ENCODE measurements at regions of chr15 and their contacts with region 1.

Region 1: GRCh38 chr15:92714477-92715401 is 59.2 kb upstream of the FAM174B start:
- DNase-seq: peak; percentile 82
- ATAC-seq: peak; percentile 94

Region 2: DNA sequence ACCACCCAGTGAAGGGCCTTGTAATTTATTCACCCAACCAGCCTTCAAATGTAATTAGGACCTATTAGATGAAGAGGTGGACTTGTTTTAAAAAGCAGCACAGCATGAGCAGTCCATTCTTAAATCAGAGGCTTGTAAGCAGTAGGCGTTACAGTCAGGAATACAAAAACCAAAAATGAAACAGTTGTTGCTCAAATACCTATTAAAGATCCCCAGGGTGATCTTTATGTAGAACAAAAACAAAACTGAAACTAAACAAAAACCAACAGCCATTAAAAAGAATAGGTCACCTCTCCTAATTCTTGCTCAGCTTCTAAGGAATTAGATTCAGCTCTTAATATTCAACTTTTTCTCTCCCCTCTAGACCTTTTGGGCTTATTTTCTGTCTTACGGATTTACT is 426.0 kb before region 1 on chr15:
- intact Hi-C with region 1: loop called (anchors 10 kb)
- DNase-seq: no peak
- ATAC-seq: no peak

Region 3: GRCh38 chr15:92391640-92392039 is 323.1 kb before region 1 on chr15:
- intact Hi-C with region 1: loop called (anchors 5 kb)
- DNase-seq: no peak
- ATAC-seq: peak; percentile 49

Region 4: GRCh38 chr15:92421976-92422375 is 292.8 kb before region 1 on chr15:
- intact Hi-C with region 1: no loop called
- DNase-seq: no peak
- ATAC-seq: no peak

Region 5: GRCh38 chr15:92521624-92522008 is 193.1 kb before region 1 on chr15:
- intact Hi-C with region 1: loop called (anchors 1 kb)
- DNase-seq: peak; percentile 66
- ATAC-seq: peak; percentile 96

Region 6: DNA sequence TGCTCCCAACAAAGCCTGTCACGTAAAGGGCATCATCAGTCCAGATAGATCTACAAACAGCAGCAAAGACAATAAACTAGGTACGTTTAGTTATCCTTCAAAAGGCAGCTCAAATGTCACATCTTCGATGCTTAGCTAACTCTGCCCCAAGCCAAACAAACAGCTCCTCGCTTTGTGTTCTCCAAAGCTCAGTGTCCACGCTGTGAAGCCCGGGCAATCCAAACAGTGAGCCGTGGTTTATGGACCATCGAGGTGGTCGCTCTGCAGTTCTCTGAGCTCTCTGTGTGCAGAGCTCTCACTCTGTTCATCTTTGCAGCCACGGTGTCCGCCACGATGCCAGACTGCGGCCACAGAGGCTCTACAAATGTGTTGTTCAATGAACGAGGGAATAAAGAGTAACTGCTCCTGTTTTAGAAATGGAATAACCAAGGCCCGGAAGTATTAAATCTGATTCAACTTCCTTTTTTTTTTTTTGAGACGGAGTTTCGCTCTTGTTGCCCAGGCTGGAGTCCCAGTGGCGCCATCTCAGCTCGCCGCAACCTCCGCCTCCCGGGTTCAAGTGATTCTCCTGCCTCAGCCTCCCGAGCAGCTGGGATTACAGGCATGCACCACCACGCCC is 58.0 kb after region 1 on chr15:
- intact Hi-C with region 1: no loop called
- DNase-seq: no peak
- ATAC-seq: no peak